GM12878 (cell line): ENCODE measurements at regions of chr1 and their contacts with region 1.

Region 1: GRCh38 chr1:98468111-98468717 is 193.3 kb upstream of the SNX7 start:
- DNase-seq: no peak
- ATAC-seq: no peak
- H3K4me3 ChIP-seq: no peak overlapping the region
- H3K27ac ChIP-seq: no peak overlapping the region
- H3K4me1 ChIP-seq: no peaks in the 10 kb centered on the region
- H3K27me3 ChIP-seq: no peaks in the 10 kb centered on the region
- CTCF ChIP-seq: peak; percentile 36 to 61 (median 57); a peak in 4 of 6 replicates
- EP300 ChIP-seq: no peak
- POLR2A ChIP-seq: no peak
- RAD21 ChIP-seq: peak; percentile 80

Region 2: GRCh38 chr1:97820470-97821188 is 647.6 kb before region 1 on chr1:
- CTCF ChIA-PET with region 1: no interaction called
- POLR2A ChIA-PET with region 1: no interaction called
- RAD21 ChIA-PET with region 1: no interaction called
- SMC1A ChIA-PET with region 1: no interaction called
- in situ Hi-C with region 1: no loop called
- intact Hi-C with region 1: loop called (anchors 10 kb)
- DNase-seq: no peak
- ATAC-seq: peak; percentile 78
- H3K4me3 ChIP-seq: no peak overlapping the region
- H3K27ac ChIP-seq: no peak overlapping the region
- H3K4me1 ChIP-seq: no peaks in the 10 kb centered on the region
- H3K27me3 ChIP-seq: no peaks in the 10 kb centered on the region
- CTCF ChIP-seq: peak; percentile 11 to 56 (median 36); a peak in 5 of 6 replicates
- EP300 ChIP-seq: no peak
- POLR2A ChIP-seq: no peak
- RAD21 ChIP-seq: peak; percentile 72

Region 3: DNA sequence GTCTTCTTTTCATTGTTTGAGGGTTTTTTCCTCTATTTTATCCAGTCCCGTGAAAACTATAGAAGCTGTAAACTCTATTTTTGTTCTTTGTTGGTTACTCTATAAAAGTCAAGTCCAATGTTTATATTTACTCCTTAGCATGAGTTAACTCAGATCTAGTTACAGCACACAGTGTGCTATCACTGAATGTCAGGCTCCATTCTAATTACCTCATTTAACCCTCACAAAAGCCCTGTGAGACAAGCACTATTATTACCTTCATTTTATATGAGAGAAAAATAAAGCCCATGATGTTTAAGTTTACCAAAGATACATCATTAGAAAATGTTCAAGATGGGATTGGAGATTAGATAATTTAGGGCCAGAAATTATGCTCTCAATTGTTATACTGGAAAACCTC is 58.1 kb before region 1 on chr1:
- CTCF ChIA-PET with region 1: no interaction called
- POLR2A ChIA-PET with region 1: no interaction called
- RAD21 ChIA-PET with region 1: no interaction called
- SMC1A ChIA-PET with region 1: no interaction called
- in situ Hi-C with region 1: no loop called
- intact Hi-C with region 1: no loop called
- DNase-seq: no peak
- ATAC-seq: no peak
- H3K4me3 ChIP-seq: no peak overlapping the region
- H3K27ac ChIP-seq: no peak overlapping the region
- H3K4me1 ChIP-seq: no peaks in the 10 kb centered on the region
- H3K27me3 ChIP-seq: no peaks in the 10 kb centered on the region
- CTCF ChIP-seq: no peak
- EP300 ChIP-seq: no peak
- POLR2A ChIP-seq: no peak
- RAD21 ChIP-seq: no peak

Region 4: DNA sequence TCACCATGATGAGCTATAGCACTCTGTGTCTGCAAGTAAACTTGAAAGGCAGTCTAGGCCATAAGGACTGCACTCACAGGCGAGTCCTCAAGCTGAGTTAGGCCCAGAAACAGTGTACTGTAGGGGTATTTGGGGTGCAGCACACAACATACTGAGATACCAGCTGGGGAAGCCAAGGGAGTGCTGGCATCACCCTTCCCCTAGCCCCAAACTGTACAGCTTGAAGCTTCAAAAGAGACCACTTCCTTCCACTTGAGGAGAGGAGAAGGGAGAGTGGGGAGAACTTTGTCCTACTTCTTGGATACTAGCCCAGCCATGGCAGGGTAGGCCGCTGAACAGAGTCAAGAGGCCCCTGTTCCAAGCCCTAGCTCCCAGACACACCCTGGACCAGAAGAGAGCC is 169.1 kb after region 1 on chr1:
- CTCF ChIA-PET with region 1: no interaction called
- POLR2A ChIA-PET with region 1: no interaction called
- RAD21 ChIA-PET with region 1: no interaction called
- SMC1A ChIA-PET with region 1: no interaction called
- in situ Hi-C with region 1: no loop called
- intact Hi-C with region 1: no loop called
- DNase-seq: no peak
- ATAC-seq: no peak
- H3K4me3 ChIP-seq: no peak overlapping the region
- H3K27ac ChIP-seq: no peak overlapping the region
- H3K4me1 ChIP-seq: no peaks in the 10 kb centered on the region
- H3K27me3 ChIP-seq: no peaks in the 10 kb centered on the region
- CTCF ChIP-seq: no peak
- EP300 ChIP-seq: no peak
- POLR2A ChIP-seq: no peak
- RAD21 ChIP-seq: no peak